ENCODE measurements at regions of chr1 and their contacts with region 1.

Region 1: GRCh38 chr1:156096640-156097391 is 14.6 kb upstream of the MEX3A start:
- DNase-seq: no peak
- H3K4me3 ChIP-seq: no peak overlapping the region
- H3K27me3 ChIP-seq: no peaks in the 10 kb centered on the region
- CTCF ChIP-seq: peak; percentile 99

Region 2: GRCh38 chr1:156077430-156077760 is 19.4 kb before region 1 on chr1:
- CTCF ChIA-PET with region 1: no interaction called
- POLR2A ChIA-PET with region 1: no interaction called
- DNase-seq: no peak
- H3K4me3 ChIP-seq: no peak overlapping the region
- H3K27me3 ChIP-seq: no peaks in the 10 kb centered on the region
- CTCF ChIP-seq: no peak

Region 3: DNA sequence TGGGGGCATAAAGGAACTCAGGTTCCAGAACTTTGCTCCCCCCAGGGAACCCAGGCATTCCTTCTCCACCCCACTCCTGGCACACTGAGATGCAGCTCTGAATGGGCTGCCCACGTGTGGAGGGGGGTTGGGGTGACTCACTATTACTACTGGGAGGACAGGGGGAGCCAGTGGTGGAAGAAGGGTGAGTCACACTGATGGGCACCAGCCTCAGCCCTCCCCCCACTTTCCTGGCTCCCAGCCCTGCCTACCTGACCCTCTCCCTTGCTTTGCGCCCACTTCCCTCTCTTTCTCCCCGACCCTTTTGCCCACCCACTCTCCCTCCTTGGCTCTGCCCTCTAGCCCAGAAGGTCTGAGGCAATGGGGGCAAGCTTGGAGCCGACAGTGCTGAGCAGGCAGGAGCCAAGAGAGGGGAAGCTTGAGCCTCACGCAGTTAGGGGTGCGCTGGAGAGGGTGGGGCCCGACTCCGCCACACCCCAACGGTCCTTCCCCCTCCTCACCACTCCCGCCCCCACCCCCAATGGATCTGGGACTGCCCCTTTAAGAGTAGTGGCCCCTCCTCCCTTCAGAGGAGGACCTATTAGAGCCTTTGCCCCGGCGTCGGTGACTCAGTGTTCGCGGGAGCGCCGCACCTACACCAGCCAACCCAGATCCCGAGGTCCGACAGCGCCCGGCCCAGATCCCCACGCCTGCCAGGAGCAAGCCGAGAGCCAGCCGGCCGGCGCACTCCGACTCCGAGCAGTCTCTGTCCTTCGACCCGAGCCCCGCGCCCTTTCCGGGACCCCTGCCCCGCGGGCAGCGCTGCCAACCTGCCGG is 17.5 kb after region 1 on chr1 and contains the start of gene LMNA:
- CTCF ChIA-PET with region 1: interaction called, 983 read pairs
- POLR2A ChIA-PET with region 1: no interaction called
- DNase-seq: peak; percentile 63
- H3K4me3 ChIP-seq: peak within 1 kb of the TSS; percentile 100
- H3K27me3 ChIP-seq: no peaks in the 10 kb centered on the region
- CTCF ChIP-seq: no peak
- polyA plus RNA-seq, gene LMNA: 537 and 840 TPM in 2 replicates

Region 4: DNA sequence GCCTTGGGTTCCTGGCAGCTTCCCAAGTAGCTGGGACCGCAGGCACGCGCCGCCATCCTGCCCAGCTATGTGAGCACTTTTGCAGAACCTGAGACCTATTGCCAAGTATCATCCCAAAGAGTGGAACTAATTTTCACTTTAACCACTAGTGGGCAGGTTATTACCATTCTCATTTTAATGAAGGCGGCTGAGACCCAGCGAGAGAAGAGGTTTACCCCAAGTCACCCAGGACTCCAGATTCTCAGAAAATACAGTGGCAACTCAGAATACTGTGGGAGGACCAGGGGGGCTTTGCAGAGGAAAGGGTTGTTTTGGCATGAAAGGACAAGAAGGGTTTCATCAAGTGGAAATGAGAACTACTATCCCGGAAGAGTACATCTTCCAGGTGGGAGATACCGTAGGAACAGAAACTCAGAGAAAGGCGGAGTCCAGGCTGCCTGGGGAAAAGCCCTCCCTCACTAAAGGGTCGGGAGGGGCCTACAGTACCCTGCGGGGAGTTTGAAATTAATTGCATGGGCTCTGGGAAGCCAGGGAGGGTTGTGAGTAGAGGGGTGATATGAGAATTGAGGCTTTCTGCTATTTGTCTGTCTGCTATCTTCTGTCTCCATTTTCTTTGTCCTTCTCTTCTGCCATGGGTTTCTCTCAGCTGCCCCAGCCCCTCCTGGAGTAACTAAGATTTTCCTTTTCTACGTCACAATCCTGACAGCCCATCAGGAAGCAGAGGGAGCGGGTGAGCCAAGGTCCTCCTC is 49.4 kb after region 1 on chr1:
- CTCF ChIA-PET with region 1: interaction called, 983 read pairs
- POLR2A ChIA-PET with region 1: no interaction called
- DNase-seq: peak; percentile 78
- H3K4me3 ChIP-seq: no peak overlapping the region
- H3K27me3 ChIP-seq: no peaks in the 10 kb centered on the region; the same call in none of the 2 replicates
- CTCF ChIP-seq: peak; percentile 73

Region 5: DNA sequence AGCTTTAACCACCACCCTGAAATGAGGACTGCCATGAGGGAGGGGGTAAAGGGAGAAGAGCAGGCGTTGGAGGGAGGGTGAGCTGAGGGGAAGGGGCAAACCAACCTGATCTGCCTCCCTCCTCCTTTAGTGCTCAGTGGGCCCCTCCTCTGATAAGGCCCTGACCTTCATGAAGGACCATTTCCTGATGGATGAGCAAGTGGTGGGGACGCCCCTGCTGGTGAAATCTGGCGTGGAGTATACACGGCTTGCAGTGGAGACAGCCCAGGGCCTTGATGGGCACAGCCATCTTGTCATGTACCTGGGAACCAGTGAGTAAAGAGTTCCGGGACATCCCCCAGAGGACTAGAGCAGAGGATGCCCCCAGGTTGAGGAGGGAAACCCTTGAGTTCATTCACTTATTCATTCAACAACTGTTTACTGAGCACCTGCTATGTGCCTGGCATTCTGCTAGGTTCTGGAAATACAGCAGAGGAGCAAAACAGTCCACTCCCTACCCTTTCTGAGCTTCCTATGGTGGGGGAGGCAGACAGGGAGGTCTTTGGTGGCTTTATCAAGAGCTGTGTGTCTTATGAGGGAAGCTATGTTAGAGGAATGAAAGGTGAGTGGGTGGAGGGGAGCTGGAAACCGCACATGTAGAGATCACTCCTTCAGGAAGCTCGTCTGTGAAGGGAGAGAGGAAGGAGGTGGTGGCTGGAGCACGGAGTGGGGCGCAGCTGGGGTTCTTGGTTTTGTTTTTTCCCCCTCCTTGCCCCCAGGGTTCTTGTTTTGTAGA is 76.1 kb after region 1 on chr1:
- CTCF ChIA-PET with region 1: no interaction called
- POLR2A ChIA-PET with region 1: no interaction called
- DNase-seq: no peak
- H3K4me3 ChIP-seq: no peak overlapping the region
- H3K27me3 ChIP-seq: no peaks in the 10 kb centered on the region
- CTCF ChIP-seq: no peak

Region 6: DNA sequence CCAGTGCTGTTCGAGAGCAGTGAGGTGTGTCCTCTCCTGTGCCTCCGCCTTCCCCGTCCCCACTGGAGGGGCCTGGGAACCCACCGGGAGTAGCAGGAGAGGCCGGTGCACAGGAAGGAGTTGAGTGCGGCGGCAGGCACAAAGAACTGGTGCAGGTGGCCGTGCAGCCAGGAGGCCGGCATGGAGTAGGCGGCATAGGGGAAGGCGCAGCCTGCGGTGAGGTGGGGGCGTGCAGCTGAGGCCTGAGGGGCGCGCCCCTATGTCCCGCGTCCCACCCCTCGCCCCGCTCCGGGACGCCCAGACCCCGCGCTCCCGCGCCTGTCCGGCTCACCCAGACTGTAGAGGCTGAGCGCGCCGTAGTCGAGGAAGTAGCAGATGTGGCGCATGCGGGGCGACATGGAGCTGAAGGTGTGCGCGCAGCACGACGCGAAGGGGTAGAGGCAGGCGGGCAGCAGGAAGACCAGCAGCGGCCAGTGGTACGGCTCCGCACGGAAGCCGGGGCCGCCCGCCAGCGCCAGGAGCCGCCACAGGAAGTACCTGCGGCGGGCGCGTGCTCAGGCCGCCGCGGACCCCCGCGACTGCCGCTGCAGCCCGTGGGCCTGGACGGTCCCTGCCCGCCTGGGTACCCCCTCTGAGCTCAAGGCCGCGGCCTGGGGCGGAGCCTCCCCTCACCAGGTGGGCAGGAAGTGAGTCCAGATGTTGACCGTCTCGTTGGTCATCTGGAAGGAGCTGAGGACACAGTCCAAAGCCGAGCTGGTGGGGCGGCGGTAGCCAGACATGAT is 148.8 kb after region 1 on chr1:
- CTCF ChIA-PET with region 1: interaction called, 12 read pairs
- POLR2A ChIA-PET with region 1: no interaction called
- DNase-seq: no peak
- H3K4me3 ChIP-seq: peak overlapping the region; percentile 26
- H3K27me3 ChIP-seq: peaks cover 1% of the 10 kb centered on the region; the same call in 1 of the 2 replicates
- CTCF ChIP-seq: no peak

Measured in BJ (cell line).